Ascending aorta (tissue), 2 donors: ENCODE measurements at regions of chr10 and their contacts with region 1.

Region 1: DNA sequence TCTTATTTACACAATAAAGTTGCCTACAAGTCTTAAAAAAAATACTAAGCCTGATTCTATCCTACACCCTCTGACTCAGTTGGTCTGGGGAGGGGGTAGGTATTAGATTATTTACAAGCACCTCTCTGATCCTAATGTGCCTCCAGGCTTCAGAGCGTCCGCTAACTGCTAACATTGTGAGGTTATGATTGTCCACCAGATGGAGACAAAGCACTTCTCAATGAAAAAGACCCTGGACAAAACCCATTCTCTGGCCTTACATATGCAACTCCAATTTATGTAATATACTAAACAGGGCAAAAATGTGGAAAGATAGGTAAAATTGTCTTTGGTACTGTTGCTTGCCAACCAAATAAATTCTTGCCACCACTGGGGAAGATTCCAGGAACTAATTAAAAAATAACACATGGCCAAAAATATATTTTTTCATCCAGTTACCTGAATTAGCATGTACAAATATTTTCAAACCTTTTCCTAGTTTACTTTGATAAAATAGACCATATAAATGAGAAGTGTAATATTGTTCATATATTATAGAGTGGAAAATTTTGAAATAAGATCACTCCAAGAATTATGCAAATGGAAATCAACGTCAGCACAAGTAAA is 92.4 kb downstream of the KIF20B start:
- DNase-seq: no peak
- H3K4me3 ChIP-seq: no peak overlapping the region
- H3K27ac ChIP-seq: no peak overlapping the region
- H3K4me1 ChIP-seq: no peaks in the 10 kb centered on the region
- H3K27me3 ChIP-seq: no peaks in the 10 kb centered on the region
- CTCF ChIP-seq: peak; percentile 66 to 80 (median 77)

Region 2: GRCh38 chr10:89759531-89759930 is 34.2 kb before region 1 on chr10:
- intact Hi-C with region 1: no loop called
- DNase-seq: no peak
- H3K4me3 ChIP-seq: no peak overlapping the region
- H3K27ac ChIP-seq: no peak overlapping the region
- H3K4me1 ChIP-seq: no peaks in the 10 kb centered on the region
- H3K27me3 ChIP-seq: no peaks in the 10 kb centered on the region
- CTCF ChIP-seq: no peak

Region 3: GRCh38 chr10:90136731-90137316 is 343.1 kb after region 1 on chr10:
- intact Hi-C with region 1: no loop called
- DNase-seq: no peak
- H3K4me3 ChIP-seq: no peak overlapping the region
- H3K27ac ChIP-seq: no peak overlapping the region
- H3K4me1 ChIP-seq: no peaks in the 10 kb centered on the region
- H3K27me3 ChIP-seq: no peaks in the 10 kb centered on the region
- CTCF ChIP-seq: no peak

Region 4: GRCh38 chr10:90592638-90593302 is 799.0 kb after region 1 on chr10:
- intact Hi-C with region 1: loop called (anchors 5 kb)
- DNase-seq: peak in 1 of 2 donors; percentile 74
- H3K4me3 ChIP-seq: no peak overlapping the region
- H3K27ac ChIP-seq: peak overlapping the region in 1 of 2 donors; percentile 50
- H3K4me1 ChIP-seq: peaks cover 3 to 9% of the 10 kb centered on the region in 2 donors
- H3K27me3 ChIP-seq: no peaks in the 10 kb centered on the region
- CTCF ChIP-seq: peak; percentile 53 to 69 (median 55)

Region 5: DNA sequence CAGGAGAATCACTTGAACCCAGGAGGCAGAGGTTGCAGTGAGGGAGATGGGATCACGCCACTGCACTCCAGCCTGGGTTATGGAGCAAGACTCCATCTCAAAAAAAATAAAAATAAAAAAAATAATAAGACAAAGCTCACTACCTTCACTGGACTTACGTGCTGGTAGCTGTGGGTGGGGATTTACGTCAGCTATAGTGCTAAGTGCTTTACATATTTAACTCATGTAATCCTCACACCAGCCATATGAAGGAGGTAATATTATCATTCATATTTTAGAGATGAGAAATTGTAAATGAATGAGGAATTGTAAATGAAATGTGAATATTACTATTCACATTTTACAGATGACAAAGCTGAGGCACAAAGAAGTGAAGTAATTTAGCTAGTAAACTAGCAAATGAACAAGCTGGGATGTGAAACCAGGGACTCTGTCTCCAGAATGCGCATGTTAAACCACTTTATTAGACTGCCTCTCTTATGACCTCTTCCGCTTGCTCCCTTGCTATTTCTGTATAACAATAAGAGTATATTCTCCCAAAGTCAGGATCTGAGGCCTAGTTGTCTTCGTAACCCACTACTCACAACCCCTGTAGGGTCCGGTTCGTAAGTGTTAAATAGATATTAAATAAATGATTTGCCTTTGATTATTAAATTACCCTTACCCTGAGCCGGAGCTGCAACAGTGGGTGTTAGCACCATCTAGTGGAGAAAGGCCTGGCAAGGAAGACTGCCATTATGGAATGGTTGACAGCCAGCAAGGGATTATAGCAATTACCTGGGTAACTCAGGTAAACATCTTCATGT is 993.8 kb after region 1 on chr10:
- intact Hi-C with region 1: loop called (anchors 1 kb)
- DNase-seq: no peak
- H3K4me3 ChIP-seq: no peak overlapping the region
- H3K27ac ChIP-seq: no peak overlapping the region
- H3K4me1 ChIP-seq: no peaks in the 10 kb centered on the region
- H3K27me3 ChIP-seq: no peaks in the 10 kb centered on the region
- CTCF ChIP-seq: peak; percentile 24 to 82 (median 61)

Region 6: GRCh38 chr10:90871766-90872647 is 1078.3 kb after region 1 on chr10 and contains the start of gene RPP30:
- intact Hi-C with region 1: loop called (anchors 2 kb)
- DNase-seq: peak; percentile 38 to 91
- H3K4me3 ChIP-seq: peak within 1 kb of the TSS; percentile 73 to 87
- H3K27ac ChIP-seq: peak within 1 kb of the TSS; percentile 44 to 69
- H3K4me1 ChIP-seq: peaks cover 0 to 10% of the 10 kb centered on the region in 2 donors
- H3K27me3 ChIP-seq: no peaks in the 10 kb centered on the region
- CTCF ChIP-seq: no peak
- total RNA-seq, gene RPP30: 141 TPM